Heart left ventricle (tissue), 16 donors: ENCODE measurements at regions of chr11 and their contacts with region 1.

Region 1: GRCh38 chr11:116276051-116277044 is 496.4 kb downstream of the BUD13 start:
- DNase-seq: peak; percentile 66 to 88 (median 72)
- ATAC-seq: peak; percentile 61 to 91 (median 81)
- H3K4me3 ChIP-seq: peak overlapping the region in 8 of 12 donors; percentile 28 to 47 (median 38)
- H3K27ac ChIP-seq: no peak overlapping the region
- H3K4me1 ChIP-seq: peaks cover 0 to 8% (median 2%) of the 10 kb centered on the region in 12 donors
- H3K27me3 ChIP-seq: peaks cover 0 to 13% (median 0%) of the 10 kb centered on the region in 9 donors
- CTCF ChIP-seq: peak; percentile 86 to 98 (median 96)
- POLR2A ChIP-seq: no peak

Region 2: DNA sequence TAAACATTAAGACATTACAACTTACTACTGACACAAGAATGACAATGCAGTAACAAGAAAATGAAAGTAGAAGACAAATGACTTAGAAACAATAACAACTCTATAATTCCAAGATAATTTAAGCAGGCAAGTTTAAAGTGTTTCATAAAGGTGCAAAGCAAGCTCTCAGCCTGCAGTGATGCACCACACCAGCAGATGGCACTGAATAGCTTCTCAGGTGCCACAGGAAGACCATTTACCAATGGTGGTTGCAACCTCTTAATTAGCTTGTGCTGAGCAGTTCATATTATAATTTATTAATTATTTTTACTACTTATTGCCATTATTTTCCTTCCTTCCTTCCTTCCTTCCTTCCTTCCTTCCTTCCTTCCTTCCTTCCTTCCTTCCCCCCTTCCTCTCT is 1537.4 kb before region 1 on chr11:
- intact Hi-C with region 1: loop called in 2 of 10 experiments (anchors 2 to 5 kb)
- DNase-seq: peak in 1 of 5 donors; percentile 12
- ATAC-seq: no peak
- H3K4me3 ChIP-seq: no peak overlapping the region
- H3K27ac ChIP-seq: no peak overlapping the region
- H3K4me1 ChIP-seq: no peaks in the 10 kb centered on the region
- H3K27me3 ChIP-seq: peaks cover 0 to 9% (median 0%) of the 10 kb centered on the region in 9 donors
- CTCF ChIP-seq: peak; percentile 51 to 76 (median 60)
- POLR2A ChIP-seq: no peak

Region 3: DNA sequence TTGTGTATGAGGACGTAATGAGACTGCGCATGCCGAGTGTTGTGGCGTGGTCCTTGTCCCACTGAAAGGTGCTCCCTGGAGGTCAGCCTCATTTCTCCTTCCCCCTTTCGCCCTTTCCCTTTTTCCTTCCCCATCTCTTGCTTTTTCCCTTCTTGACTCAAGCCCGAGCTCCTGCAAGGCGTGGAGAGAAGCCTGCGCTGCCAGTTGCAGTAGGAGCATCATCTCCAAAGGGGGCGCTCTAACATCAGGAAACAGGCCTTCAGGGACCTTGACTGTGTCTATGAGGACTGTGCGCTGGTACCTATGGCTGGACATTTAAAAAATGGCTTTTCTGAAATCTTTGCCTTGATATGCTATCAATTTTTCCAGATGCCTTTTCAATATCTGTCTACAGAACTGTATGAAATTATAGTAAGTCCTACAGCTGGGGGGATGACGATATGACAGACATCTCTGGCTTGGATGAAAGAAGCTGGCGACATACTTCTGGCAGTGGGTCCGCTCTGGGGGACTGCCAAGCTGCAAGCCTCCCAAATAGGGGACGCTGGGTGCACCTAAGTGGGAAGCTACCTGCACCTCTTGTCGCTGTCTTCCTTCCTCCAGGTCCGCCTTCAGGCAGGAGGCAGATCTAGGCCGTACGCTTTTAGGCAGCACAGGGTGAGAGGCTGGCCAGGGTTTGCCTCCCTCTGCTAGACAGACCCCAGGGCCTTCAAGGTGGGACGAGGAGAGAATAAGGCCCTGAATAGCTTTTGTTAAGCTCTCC is 1501.6 kb before region 1 on chr11:
- intact Hi-C with region 1: loop called in 3 of 10 experiments (anchors 5 to 10 kb)
- DNase-seq: peak in 4 of 5 donors; percentile 21 to 35 (median 26)
- ATAC-seq: peak; percentile 71 to 86 (median 80)
- H3K4me3 ChIP-seq: no peak overlapping the region
- H3K27ac ChIP-seq: peak overlapping the region in 1 of 12 donors; percentile 39
- H3K4me1 ChIP-seq: peaks cover 0 to 15% (median 8%) of the 10 kb centered on the region in 12 donors
- H3K27me3 ChIP-seq: no peaks in the 10 kb centered on the region
- CTCF ChIP-seq: peak; percentile 40 to 74 (median 58)
- POLR2A ChIP-seq: no peak

Region 4: DNA sequence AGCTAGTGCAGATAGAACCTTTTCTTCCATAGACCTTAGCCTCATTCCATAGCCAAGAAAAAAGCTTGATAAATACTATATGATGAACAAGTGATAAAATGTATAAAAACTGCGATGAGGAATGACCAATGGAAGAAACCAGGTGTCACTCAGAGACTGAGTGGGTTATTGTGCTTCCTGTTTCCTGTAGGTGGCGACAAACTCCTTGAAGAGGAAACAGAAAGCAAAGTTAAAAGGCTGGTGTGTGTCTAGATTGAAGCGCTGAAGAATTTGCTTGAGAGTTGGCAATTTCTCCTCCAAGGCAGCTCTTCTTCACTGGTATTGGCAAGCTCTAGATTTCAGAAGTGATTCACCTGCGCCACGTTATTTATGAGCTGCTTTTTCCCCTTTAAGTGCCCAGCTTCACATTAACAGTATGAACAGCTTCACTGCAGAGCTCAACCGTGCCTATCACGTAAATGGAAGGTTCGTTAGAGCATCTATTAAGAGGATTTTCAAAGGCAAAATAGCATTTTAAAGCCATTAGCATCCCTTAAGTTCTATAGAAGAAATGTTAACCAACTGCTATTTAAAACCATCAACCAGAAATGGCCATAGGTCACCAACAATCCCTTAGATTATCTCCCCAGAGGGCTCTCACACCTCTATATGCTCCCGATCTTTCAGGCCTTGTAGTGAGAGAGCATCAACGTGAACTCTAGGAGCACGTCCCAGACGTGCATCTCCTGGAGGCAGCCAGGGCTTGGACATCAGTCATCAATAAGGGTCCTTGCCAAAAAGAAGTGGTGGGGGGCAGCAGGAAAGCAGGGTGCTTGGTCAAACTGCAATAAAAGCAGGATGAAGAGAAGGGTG is 951.5 kb before region 1 on chr11:
- intact Hi-C with region 1: loop called in 7 of 10 experiments (anchors 2 to 5 kb)
- DNase-seq: peak in 1 of 5 donors; percentile 20
- ATAC-seq: peak; percentile 61 to 90 (median 78)
- H3K4me3 ChIP-seq: peak overlapping the region in 3 of 12 donors; percentile 8 to 37 (median 14)
- H3K27ac ChIP-seq: no peak overlapping the region
- H3K4me1 ChIP-seq: peaks cover 0 to 8% (median 0%) of the 10 kb centered on the region in 12 donors
- H3K27me3 ChIP-seq: no peaks in the 10 kb centered on the region
- CTCF ChIP-seq: peak; percentile 67 to 85 (median 78)
- POLR2A ChIP-seq: no peak

Region 5: GRCh38 chr11:115334932-115335788 is 941.2 kb before region 1 on chr11:
- intact Hi-C with region 1: loop called in 7 of 10 experiments (anchors 2 to 5 kb)
- DNase-seq: no peak
- ATAC-seq: no peak
- H3K4me3 ChIP-seq: no peak overlapping the region
- H3K27ac ChIP-seq: no peak overlapping the region
- H3K4me1 ChIP-seq: peaks cover 0 to 8% (median 0%) of the 10 kb centered on the region in 12 donors
- H3K27me3 ChIP-seq: no peaks in the 10 kb centered on the region
- CTCF ChIP-seq: peak; percentile 50 to 85 (median 73)
- POLR2A ChIP-seq: no peak

Region 6: DNA sequence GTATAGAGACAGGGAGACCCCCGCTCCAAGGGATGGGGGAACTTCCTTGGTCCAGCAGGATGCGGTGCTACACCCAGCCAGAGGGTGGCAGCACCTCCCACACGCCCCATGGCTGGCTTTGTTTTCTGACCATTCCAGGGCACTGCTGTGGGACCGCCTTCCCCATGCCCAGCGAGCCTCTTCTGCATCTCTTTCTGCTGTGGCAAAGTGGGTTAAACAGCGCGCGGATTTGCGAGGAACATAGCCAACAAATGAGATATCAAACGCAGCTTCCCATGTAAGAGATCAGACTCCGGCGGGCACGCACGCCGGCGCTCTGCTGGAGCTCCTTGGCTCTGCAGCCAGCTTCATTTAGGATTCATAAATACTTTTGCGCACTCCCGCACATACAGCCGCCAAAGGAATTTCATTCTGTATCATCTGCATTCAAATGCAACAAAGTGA is 286.3 kb before region 1 on chr11:
- intact Hi-C with region 1: loop called in 7 of 10 experiments (anchors 2 to 5 kb)
- DNase-seq: peak in 2 of 5 donors; percentile 28 to 44
- ATAC-seq: peak in 3 of 4 donors; percentile 66 to 81 (median 75)
- H3K4me3 ChIP-seq: peak overlapping the region in 7 of 12 donors; percentile 12 to 38 (median 22)
- H3K27ac ChIP-seq: no peak overlapping the region
- H3K4me1 ChIP-seq: peaks cover 0 to 4% (median 0%) of the 10 kb centered on the region in 12 donors
- H3K27me3 ChIP-seq: peaks cover 0 to 3% (median 0%) of the 10 kb centered on the region in 9 donors
- CTCF ChIP-seq: peak; percentile 56 to 85 (median 72)
- POLR2A ChIP-seq: no peak

Region 7: DNA sequence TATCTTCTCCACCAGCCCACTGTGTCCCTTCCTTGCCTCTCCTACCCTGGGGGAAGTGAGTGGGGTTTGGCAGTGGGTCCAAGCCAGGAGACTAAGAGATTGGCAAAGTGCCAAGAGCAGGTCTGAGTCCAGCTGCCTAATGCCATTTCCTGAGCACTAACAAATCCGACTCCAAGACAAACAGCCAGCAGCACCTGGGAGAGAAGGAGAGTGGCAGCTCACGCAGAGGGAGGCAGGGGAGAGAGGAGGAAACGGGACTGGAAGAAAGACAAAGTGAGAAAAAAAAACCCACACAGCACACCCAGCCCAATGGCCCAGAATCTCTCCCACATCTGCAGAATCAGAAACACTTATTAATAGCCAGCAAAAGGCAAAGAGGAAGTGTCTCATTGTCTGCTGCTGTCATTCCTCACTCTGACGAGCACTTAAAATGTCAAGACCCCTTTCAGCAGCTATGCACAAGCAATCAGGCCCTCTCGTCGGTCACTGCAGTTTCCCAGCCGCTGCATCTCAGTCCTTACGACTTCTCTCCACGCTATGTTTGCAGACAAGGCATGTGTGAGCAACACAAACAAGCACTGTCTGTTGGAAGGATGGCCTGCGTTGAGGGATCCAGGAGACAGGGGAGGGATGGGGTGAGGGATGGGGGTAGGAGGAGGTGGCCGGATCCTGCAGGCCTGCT is 213.7 kb before region 1 on chr11:
- intact Hi-C with region 1: no loop called
- DNase-seq: no peak
- ATAC-seq: peak in 1 of 4 donors; percentile 22
- H3K4me3 ChIP-seq: no peak overlapping the region
- H3K27ac ChIP-seq: no peak overlapping the region
- H3K4me1 ChIP-seq: peaks cover 0 to 12% (median 4%) of the 10 kb centered on the region in 12 donors
- H3K27me3 ChIP-seq: no peaks in the 10 kb centered on the region
- CTCF ChIP-seq: no peak
- POLR2A ChIP-seq: no peak

Region 8: DNA sequence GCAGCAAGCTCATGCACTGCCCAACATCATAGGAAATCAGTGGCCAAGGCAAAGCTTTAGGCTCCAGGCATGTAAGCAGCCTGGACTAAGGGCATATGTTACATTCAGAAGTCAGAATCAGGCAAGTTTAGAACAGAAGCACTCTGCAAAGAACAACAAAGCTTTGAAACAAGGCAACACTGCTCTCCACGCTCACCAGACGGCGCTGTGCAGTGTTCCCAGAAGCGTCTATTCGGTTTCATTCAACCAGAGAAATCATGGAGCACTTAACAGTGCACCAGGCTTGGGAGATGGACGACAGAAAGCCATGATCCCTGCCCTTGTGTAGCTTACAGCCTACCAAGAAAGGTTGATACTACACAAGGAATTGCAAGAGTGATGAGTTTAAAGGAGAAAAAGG is 59.3 kb before region 1 on chr11:
- intact Hi-C with region 1: loop called in 3 of 10 experiments (anchors 2 to 5 kb)
- DNase-seq: peak in 1 of 5 donors; percentile 42
- ATAC-seq: peak in 2 of 4 donors; percentile 16 to 64
- H3K4me3 ChIP-seq: no peak overlapping the region
- H3K27ac ChIP-seq: no peak overlapping the region
- H3K4me1 ChIP-seq: peaks cover 0 to 7% (median 0%) of the 10 kb centered on the region in 12 donors
- H3K27me3 ChIP-seq: no peaks in the 10 kb centered on the region
- CTCF ChIP-seq: peak in 11 of 12 donors; percentile 40 to 83 (median 61)
- POLR2A ChIP-seq: no peak